HCT116 (cell line): ENCODE measurements at regions of chr9 and their contacts with region 1.

Region 1: DNA sequence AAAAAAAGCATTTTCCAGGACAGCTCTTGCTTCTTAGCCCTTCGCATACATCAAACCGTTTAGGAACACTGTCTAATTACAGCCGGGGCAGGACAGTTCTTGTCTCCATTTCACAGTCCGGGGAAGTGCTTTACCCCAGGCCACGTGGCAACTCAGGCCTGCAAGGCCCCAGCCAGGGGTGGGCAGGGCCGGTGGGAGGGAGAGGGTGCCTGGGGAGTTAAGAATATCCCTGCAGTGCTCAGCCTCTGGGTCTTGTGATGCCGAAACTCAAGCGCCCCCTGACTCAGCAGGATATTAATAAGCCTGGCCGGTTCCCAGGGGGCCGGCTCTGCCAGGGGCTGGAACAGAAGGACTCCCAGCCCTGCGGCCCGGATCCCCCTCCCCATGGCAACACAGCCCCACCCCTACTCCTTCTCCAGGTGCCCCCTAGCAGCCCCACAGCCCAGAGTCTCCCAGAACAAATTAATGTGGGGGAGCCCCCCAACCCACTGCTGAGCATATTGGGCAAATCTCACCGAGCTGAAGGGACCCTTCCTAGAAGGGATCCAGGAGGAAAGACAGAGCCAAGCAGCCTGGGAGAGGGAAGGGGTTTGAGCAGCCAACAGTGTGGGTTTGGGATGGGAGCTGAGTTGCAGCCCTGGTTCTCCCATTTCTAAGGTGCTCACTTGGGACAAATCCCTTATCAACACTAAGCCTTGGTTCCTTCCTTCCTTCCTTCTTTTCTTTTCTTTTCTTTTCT is 45.3 kb downstream of the PLPP7 start:
- DNase-seq: no peak
- ATAC-seq: no peak
- H3K4me3 ChIP-seq: no peak overlapping the region
- H3K27ac ChIP-seq: no peak overlapping the region
- H3K4me1 ChIP-seq: peaks cover 5 to 31% of the 10 kb centered on the region in 2 experiments
- H3K27me3 ChIP-seq: no peaks in the 10 kb centered on the region
- CTCF ChIP-seq: no peak
- POLR2A ChIP-seq: no peak
- RAD21 ChIP-seq: no peak

Region 2: GRCh38 chr9:131178382-131178781 is 156.4 kb before region 1 on chr9:
- CTCF ChIA-PET with region 1: interaction called, 29 read pairs
- POLR2A ChIA-PET with region 1: no interaction called
- RAD21 ChIA-PET with region 1: interaction called in 1 of 2 experiments, 5 read pairs
- intact Hi-C with region 1: loop called (anchors 1 kb)
- DNase-seq: peak; percentile 39
- ATAC-seq: peak; percentile 99
- H3K4me3 ChIP-seq: no peak overlapping the region
- H3K27ac ChIP-seq: no peak overlapping the region
- H3K4me1 ChIP-seq: no peaks in the 10 kb centered on the region
- H3K27me3 ChIP-seq: no peaks in the 10 kb centered on the region
- CTCF ChIP-seq: peak; percentile 53 to 97 (median 92); a peak in 5 of 6 replicates
- POLR2A ChIP-seq: no peak
- RAD21 ChIP-seq: peak; percentile 75